CD4-positive, alpha-beta T cell (primary cell): ENCODE measurements at regions of chr17 and their contacts with region 1.

Region 1: GRCh38 chr17:29807520-29808351 is 122.3 kb downstream of the SSH2 start:
- DNase-seq: peak; percentile 49 to 82 (median 60)
- ATAC-seq: peak; percentile 84
- H3K4me3 ChIP-seq: no peak overlapping the region
- H3K4me3 Mint-ChIP-seq: no peak overlapping the region
- H3K27ac ChIP-seq: no peak overlapping the region
- H3K27ac Mint-ChIP-seq: no peak overlapping the region
- H3K4me1 ChIP-seq: peaks cover 8% of the 10 kb centered on the region
- H3K4me1 Mint-ChIP-seq: peaks cover 35% of the 10 kb centered on the region
- H3K27me3 ChIP-seq: no peaks in the 10 kb centered on the region
- H3K27me3 Mint-ChIP-seq: no peaks in the 10 kb centered on the region
- CTCF ChIP-seq: peak; percentile 97

Region 2: DNA sequence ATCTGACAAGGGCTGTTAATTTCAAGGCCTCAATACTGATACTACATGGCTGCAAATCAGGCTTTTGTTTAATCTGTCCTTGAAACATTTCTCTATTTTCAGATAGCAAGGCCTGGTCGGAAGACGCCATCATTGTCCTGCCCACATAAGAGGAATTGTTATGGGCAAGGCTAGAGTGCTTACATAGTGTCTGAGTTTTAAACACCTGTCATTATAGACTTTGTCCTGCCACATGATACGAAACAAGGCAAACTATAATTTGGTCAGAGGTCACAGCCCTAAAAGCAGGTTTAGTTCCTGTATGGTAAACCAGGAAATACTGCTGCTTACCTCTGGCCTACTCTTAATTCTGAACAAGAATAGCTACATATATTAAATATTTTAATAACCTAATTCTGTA is 17.9 kb after region 1 on chr17:
- CTCF ChIA-PET with region 1: interaction called, 17 read pairs
- POLR2A ChIA-PET with region 1: interaction called, 3 read pairs
- intact Hi-C with region 1: no loop called
- DNase-seq: no peak
- ATAC-seq: no peak
- H3K4me3 ChIP-seq: no peak overlapping the region
- H3K4me3 Mint-ChIP-seq: no peak overlapping the region
- H3K27ac ChIP-seq: no peak overlapping the region
- H3K27ac Mint-ChIP-seq: no peak overlapping the region
- H3K4me1 ChIP-seq: no peaks in the 10 kb centered on the region
- H3K4me1 Mint-ChIP-seq: peaks cover 55% of the 10 kb centered on the region
- H3K27me3 ChIP-seq: no peaks in the 10 kb centered on the region
- H3K27me3 Mint-ChIP-seq: no peaks in the 10 kb centered on the region
- CTCF ChIP-seq: no peak

Region 3: GRCh38 chr17:29903471-29903870 is 95.7 kb after region 1 on chr17:
- CTCF ChIA-PET with region 1: no interaction called
- POLR2A ChIA-PET with region 1: no interaction called
- intact Hi-C with region 1: no loop called
- DNase-seq: no peak
- ATAC-seq: no peak
- H3K4me3 ChIP-seq: no peak overlapping the region
- H3K4me3 Mint-ChIP-seq: no peak overlapping the region
- H3K27ac ChIP-seq: no peak overlapping the region
- H3K27ac Mint-ChIP-seq: no peak overlapping the region
- H3K4me1 ChIP-seq: peaks cover 15% of the 10 kb centered on the region
- H3K4me1 Mint-ChIP-seq: peaks cover 52% of the 10 kb centered on the region
- H3K27me3 ChIP-seq: no peaks in the 10 kb centered on the region
- H3K27me3 Mint-ChIP-seq: no peaks in the 10 kb centered on the region
- CTCF ChIP-seq: no peak

Region 4: DNA sequence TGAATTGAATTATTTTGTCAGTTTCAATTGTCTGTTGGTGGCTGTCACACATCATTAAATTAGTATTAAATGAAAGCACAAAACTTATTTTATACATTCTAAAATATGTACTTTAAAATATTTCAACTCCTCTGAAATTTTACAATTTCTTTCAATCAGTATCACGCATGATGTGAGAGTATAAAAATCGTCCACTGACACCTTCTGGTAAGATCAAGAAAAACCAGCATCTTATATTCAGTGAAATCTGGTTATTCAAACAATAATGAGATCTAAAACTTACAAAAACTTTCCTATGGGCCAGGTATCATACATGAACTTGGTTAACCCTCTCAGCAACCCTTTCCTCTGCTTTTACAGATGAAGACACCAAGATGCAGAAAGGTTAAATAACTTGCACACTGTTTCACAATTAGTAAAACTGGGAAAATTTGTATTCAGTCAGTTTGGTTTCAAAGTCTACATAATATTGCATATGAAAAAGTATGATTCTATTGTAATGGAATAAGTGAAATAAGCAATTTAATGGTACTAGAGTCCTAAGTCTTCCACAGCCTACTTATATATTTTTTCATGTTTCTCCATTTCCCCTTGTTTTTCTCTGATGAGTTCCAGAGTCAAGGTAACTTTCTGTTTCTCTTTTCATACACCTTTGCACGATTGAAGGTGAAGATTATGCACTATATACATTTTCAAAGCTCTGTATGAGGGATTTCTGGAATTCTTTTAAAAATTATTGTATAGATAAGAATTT is 192.4 kb after region 1 on chr17:
- CTCF ChIA-PET with region 1: no interaction called
- POLR2A ChIA-PET with region 1: no interaction called
- intact Hi-C with region 1: loop called (anchors 5 kb)
- DNase-seq: peak in 3 of 14 experiments; percentile 13 to 20 (median 19)
- ATAC-seq: no peak
- H3K4me3 ChIP-seq: no peak overlapping the region
- H3K4me3 Mint-ChIP-seq: peak overlapping the region; percentile 64
- H3K27ac ChIP-seq: no peak overlapping the region
- H3K27ac Mint-ChIP-seq: no peak overlapping the region
- H3K4me1 ChIP-seq: peaks cover 3% of the 10 kb centered on the region
- H3K4me1 Mint-ChIP-seq: peaks cover 12% of the 10 kb centered on the region
- H3K27me3 ChIP-seq: no peaks in the 10 kb centered on the region
- H3K27me3 Mint-ChIP-seq: no peaks in the 10 kb centered on the region
- CTCF ChIP-seq: no peak

Region 5: GRCh38 chr17:30021708-30022317 is 214.1 kb after region 1 on chr17:
- CTCF ChIA-PET with region 1: interaction called, 14 read pairs
- POLR2A ChIA-PET with region 1: interaction called, 5 read pairs
- intact Hi-C with region 1: loop called (anchors 1 kb)
- DNase-seq: peak in 9 of 14 experiments; percentile 3 to 73 (median 24)
- ATAC-seq: peak; percentile 78
- H3K4me3 ChIP-seq: no peak overlapping the region
- H3K4me3 Mint-ChIP-seq: no peak overlapping the region
- H3K27ac ChIP-seq: no peak overlapping the region
- H3K27ac Mint-ChIP-seq: no peak overlapping the region
- H3K4me1 ChIP-seq: no peaks in the 10 kb centered on the region
- H3K4me1 Mint-ChIP-seq: no peaks in the 10 kb centered on the region
- H3K27me3 ChIP-seq: no peaks in the 10 kb centered on the region
- H3K27me3 Mint-ChIP-seq: peaks cover 10% of the 10 kb centered on the region
- CTCF ChIP-seq: peak; percentile 98

Region 6: GRCh38 chr17:30093463-30094147 is 285.9 kb after region 1 on chr17:
- CTCF ChIA-PET with region 1: interaction called, 4 read pairs
- POLR2A ChIA-PET with region 1: no interaction called
- intact Hi-C with region 1: loop called (anchors 2 kb)
- DNase-seq: peak in 11 of 14 experiments; percentile 5 to 74 (median 24)
- ATAC-seq: peak; percentile 51
- H3K4me3 ChIP-seq: no peak overlapping the region
- H3K4me3 Mint-ChIP-seq: no peak overlapping the region
- H3K27ac ChIP-seq: no peak overlapping the region
- H3K27ac Mint-ChIP-seq: no peak overlapping the region
- H3K4me1 ChIP-seq: peaks cover 6% of the 10 kb centered on the region
- H3K4me1 Mint-ChIP-seq: peaks cover 6% of the 10 kb centered on the region
- H3K27me3 ChIP-seq: peaks cover 3 to 4% of the 10 kb centered on the region in 2 experiments
- H3K27me3 Mint-ChIP-seq: peaks cover 26% of the 10 kb centered on the region
- CTCF ChIP-seq: peak; percentile 85